Mammary epithelial cell (primary cell): ENCODE measurements at regions of chr2 and their contacts with region 1.

Region 1: GRCh38 chr2:128374001-128374710 is 55.5 kb upstream of the HS6ST1 start:
- DNase-seq: peak; percentile 63
- H3K4me3 ChIP-seq: no peak overlapping the region
- H3K27ac ChIP-seq: peak overlapping the region; percentile 43
- H3K4me1 ChIP-seq: peaks cover 52% of the 10 kb centered on the region
- H3K27me3 ChIP-seq: no peaks in the 10 kb centered on the region
- CTCF ChIP-seq: no peak

Region 2: DNA sequence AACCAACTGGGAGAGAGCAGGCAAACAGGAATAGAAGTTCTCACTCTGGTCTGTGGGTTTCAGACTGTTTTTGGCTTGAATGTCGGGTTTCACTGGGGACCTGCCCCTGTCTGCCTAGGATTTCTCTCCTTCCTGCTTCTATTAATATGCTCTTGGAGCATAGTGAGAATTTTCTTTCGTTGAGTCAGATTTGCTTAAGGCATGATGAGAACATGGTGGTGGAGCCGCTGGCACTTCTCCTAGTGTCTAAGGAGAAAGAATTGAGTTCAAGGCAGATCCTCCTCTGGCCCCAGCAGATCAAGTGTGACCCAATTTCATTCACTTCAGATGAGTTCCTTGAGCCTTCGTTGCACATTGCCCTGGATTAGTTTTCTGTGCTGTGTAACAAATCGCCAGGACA is 48.4 kb after region 1 on chr2:
- CTCF ChIA-PET with region 1: no interaction called
- dilution Hi-C with region 1: no loop called
- in situ Hi-C with region 1: no loop called
- intact Hi-C with region 1: loop called (anchors 2 kb)
- DNase-seq: peak; percentile 72
- H3K4me3 ChIP-seq: no peak overlapping the region
- H3K27ac ChIP-seq: peak overlapping the region; percentile 35
- H3K4me1 ChIP-seq: peaks cover 16% of the 10 kb centered on the region
- H3K27me3 ChIP-seq: no peaks in the 10 kb centered on the region
- CTCF ChIP-seq: no peak